ENCODE measurements at regions of chr19 and their contacts with region 1.

Region 1: GRCh38 chr19:7925171-7925851 is 624 bp downstream of the CTXN1 start:
- DNase-seq: peak; percentile 71
- H3K4me3 Mint-ChIP-seq: peak overlapping the region; percentile 81
- H3K27ac Mint-ChIP-seq: peak overlapping the region; percentile 78
- H3K4me1 Mint-ChIP-seq: peaks cover 25% of the 10 kb centered on the region
- H3K27me3 Mint-ChIP-seq: peaks cover 4% of the 10 kb centered on the region

Region 2: DNA sequence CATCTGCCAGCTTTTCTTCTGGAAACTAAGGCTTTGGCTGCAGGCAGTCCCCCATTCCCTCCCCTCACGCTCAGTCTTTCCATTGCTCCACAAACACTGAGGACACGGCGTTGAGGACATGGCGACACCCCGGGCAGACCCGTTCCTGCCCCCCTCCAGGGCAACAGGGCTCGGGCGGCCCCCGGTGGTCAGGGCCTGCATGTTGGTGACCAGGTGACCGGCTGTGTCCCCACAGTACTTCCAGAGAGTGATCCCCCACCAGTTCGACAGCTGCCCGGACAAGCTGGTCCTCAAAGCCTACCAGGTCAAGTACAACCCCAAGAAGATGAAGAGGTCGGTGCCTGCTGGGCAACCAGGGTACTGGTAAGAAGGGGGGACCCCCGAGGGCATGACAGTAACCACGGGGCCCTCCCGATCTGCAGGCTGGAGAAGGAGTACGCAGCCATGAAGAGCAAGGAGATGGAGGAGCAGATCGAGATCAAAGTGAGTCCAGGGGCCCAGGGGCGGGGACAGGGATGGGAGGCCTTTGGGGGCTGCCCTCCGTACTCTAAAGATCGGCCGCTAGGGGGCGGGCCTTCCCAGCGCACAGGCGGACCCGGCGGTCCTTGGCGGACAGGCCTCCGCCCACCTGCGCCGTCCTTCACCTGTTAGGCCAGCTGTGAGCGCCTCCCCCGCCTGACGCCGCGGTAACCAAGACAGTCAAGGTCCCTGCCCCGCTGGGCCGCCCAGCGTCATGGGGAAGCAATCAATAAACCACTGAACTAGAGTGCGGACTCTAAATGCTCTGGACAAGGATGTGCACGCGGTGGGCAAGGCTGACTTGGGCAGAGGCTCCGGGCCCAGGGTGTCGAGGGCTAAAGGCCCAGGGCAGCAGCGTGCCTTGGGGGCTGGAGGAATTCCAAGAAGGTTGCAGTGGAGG is 72.2 kb before region 1 on chr19:
- intact Hi-C with region 1: loop called (anchors 2 kb)
- DNase-seq: peak; percentile 49
- H3K4me3 Mint-ChIP-seq: no peak overlapping the region
- H3K27ac Mint-ChIP-seq: no peak overlapping the region
- H3K4me1 Mint-ChIP-seq: no peaks in the 10 kb centered on the region
- H3K27me3 Mint-ChIP-seq: peaks cover 2% of the 10 kb centered on the region

Region 3: GRCh38 chr19:7908742-7909461 is 16.4 kb before region 1 on chr19:
- intact Hi-C with region 1: no loop called
- DNase-seq: no peak
- H3K4me3 Mint-ChIP-seq: no peak overlapping the region
- H3K27ac Mint-ChIP-seq: no peak overlapping the region
- H3K4me1 Mint-ChIP-seq: peaks cover 16% of the 10 kb centered on the region
- H3K27me3 Mint-ChIP-seq: no peaks in the 10 kb centered on the region

Measured in activated T-helper 1 cell treated with anti-CD3 and anti-CD28 coated beads, Interleukin-12 subunit alpha, Interleukin-12 subunit beta, Interleukin-2, Interleukin-4 antibody, amounts not matched to agents 30 ng/mL and 10 ng/mL and 1 ng/mL, durations not matched to agents 14 hours and 24 hours and 36 hours (primary cell).